ENCODE measurements at regions of chr14 and their contacts with region 1.

Region 1: GRCh38 chr14:70972107-70972976 is 65.1 kb downstream of the PCNX1 start:
- DNase-seq: peak; percentile 72 to 82 (median 78)
- H3K4me3 ChIP-seq: no peak overlapping the region
- H3K4me3 Mint-ChIP-seq: peak overlapping the region in 4 of 8 donors; percentile 20 to 63 (median 46)
- H3K27ac ChIP-seq: peak overlapping the region; percentile 4
- H3K27ac Mint-ChIP-seq: peak overlapping the region; percentile 67 to 90 (median 87)
- H3K4me1 ChIP-seq: peaks cover 48% of the 10 kb centered on the region
- H3K4me1 Mint-ChIP-seq: peaks cover 40 to 67% (median 52%) of the 10 kb centered on the region in 4 donors
- H3K27me3 ChIP-seq: no peaks in the 10 kb centered on the region
- H3K27me3 Mint-ChIP-seq: no peaks in the 10 kb centered on the region

Region 2: DNA sequence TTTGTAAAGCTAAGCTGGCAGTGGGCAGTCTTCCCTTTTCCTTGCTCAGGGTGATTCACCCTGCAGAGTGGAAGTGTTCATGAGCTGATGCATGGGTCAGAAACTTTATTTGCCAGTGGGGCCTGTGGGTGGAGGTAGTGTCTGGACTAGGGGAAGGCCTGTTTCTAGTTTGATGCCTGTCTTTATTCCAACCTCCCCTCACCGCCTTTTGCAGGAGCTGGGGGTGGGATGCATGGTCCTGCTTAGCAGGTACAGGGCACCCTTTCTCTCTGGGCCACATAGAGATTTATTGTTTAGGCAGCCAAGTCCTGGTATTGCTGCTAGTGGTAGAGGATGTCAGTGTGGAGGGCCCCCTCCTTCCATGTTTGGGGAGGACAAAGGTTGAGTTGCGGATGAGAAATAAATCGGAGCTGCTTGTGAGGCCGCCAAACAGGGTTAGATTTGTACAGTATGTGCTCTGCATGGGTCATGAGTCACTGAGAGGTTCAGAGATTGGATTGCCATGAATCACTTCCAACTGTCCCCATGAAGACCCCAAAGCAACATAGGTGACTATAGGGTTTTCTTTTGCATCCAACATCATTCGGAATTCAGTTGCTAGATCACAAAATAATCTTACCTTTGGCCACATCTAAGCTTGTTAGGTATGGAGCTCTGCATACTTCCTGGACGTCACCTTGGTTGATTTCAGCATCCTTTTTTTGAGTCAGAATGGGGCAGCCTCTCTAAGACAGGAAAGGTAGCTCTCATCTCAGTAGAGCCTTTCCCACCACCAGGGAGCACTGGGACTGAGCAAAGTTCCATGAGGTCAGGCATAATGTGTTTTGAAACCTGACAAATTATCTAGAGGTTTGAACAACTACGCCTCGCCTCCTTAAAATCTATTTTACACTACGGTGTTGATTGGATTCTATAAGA is 1084.3 kb before region 1 on chr14:
- CTCF ChIA-PET with region 1: no interaction called
- POLR2A ChIA-PET with region 1: no interaction called
- intact Hi-C with region 1: no loop called
- DNase-seq: no peak
- H3K4me3 ChIP-seq: no peak overlapping the region
- H3K4me3 Mint-ChIP-seq: no peak overlapping the region
- H3K27ac ChIP-seq: no peak overlapping the region
- H3K27ac Mint-ChIP-seq: peak overlapping the region in 1 of 7 donors; percentile 33
- H3K4me1 ChIP-seq: no peaks in the 10 kb centered on the region
- H3K4me1 Mint-ChIP-seq: no peaks in the 10 kb centered on the region
- H3K27me3 ChIP-seq: no peaks in the 10 kb centered on the region
- H3K27me3 Mint-ChIP-seq: peaks cover 18 to 28% of the 10 kb centered on the region in 2 donors

Region 3: DNA sequence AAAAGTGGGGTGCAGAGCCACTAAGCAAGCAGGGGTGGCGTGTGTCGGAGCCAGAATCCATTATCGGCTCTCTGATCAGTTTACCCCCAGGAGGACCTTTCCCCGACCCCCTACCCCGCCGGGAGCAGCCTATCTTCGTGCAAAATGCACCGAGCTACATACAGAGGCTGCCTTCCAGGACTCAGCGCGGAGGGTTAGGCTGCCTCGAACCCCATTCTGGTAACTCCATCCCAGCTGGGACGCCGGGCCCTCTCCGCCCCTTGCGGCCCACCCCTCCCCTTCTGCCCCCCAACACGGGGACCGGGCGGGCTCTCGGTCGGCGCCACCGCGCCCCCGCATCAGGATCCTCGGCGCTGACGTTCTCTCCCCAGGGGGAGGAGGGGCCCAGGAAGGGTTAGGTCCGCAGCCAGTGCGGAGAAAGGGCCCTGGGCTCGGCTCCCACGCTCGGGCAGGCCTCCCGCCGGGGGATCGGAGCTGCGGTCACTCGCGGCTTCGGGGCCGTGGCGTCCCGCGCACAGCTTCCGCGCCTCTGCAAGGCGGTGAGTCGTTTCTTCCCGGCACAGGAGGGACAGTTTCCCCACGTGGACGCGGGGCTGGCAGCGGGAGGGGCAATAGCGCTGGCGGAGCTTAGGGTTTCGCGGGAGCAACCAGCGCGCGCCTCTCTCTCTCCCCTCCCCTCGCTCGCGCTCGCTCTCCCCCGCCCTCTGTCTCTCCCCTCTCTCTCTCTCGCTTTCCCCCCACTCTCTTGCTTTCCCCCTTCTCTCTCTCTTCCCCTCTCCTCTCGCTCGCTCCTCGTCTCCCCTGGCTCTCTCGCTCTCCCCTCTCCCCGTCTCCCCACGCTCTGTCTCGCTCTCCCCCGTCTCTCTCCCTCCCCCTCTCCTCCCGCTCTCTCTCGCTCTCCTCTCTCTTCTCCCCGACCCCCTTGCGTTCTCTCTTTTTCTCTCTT is 150.5 kb before region 1 on chr14:
- CTCF ChIA-PET with region 1: interaction called, 63 read pairs
- POLR2A ChIA-PET with region 1: interaction called, 3 read pairs
- intact Hi-C with region 1: loop called (anchors 1 kb)
- DNase-seq: peak; percentile 37 to 79 (median 49)
- H3K4me3 ChIP-seq: peak overlapping the region; percentile 52 to 73
- H3K4me3 Mint-ChIP-seq: peak overlapping the region; percentile 83 to 93 (median 86)
- H3K27ac ChIP-seq: peak overlapping the region; percentile 14
- H3K27ac Mint-ChIP-seq: peak overlapping the region in 5 of 7 donors; percentile 62 to 77 (median 68)
- H3K4me1 ChIP-seq: peaks cover 18% of the 10 kb centered on the region
- H3K4me1 Mint-ChIP-seq: peaks cover 10 to 23% (median 14%) of the 10 kb centered on the region in 4 donors
- H3K27me3 ChIP-seq: no peaks in the 10 kb centered on the region
- H3K27me3 Mint-ChIP-seq: no peaks in the 10 kb centered on the region

Region 4: GRCh38 chr14:70873627-70874026 is 98.7 kb before region 1 on chr14:
- CTCF ChIA-PET with region 1: interaction called, 3 read pairs
- POLR2A ChIA-PET with region 1: no interaction called
- intact Hi-C with region 1: loop called (anchors 1 kb)
- DNase-seq: peak; percentile 31 to 43 (median 35)
- H3K4me3 ChIP-seq: no peak overlapping the region
- H3K4me3 Mint-ChIP-seq: peak overlapping the region in 5 of 8 donors; percentile 42 to 69 (median 61)
- H3K27ac ChIP-seq: no peak overlapping the region
- H3K27ac Mint-ChIP-seq: peak overlapping the region; percentile 68 to 90 (median 86)
- H3K4me1 ChIP-seq: peaks cover 23% of the 10 kb centered on the region
- H3K4me1 Mint-ChIP-seq: peaks cover 10 to 26% (median 21%) of the 10 kb centered on the region in 4 donors
- H3K27me3 ChIP-seq: no peaks in the 10 kb centered on the region
- H3K27me3 Mint-ChIP-seq: no peaks in the 10 kb centered on the region

Region 5: GRCh38 chr14:70934502-70935134 is 37.7 kb before region 1 on chr14:
- CTCF ChIA-PET with region 1: no interaction called
- POLR2A ChIA-PET with region 1: no interaction called
- intact Hi-C with region 1: no loop called
- DNase-seq: peak in 2 of 5 donors; percentile 22 to 29
- H3K4me3 ChIP-seq: peak overlapping the region in 1 of 2 donors; percentile 15
- H3K4me3 Mint-ChIP-seq: peak overlapping the region; percentile 57 to 84 (median 78)
- H3K27ac ChIP-seq: peak overlapping the region; percentile 27
- H3K27ac Mint-ChIP-seq: peak overlapping the region; percentile 70 to 92 (median 83)
- H3K4me1 ChIP-seq: peaks cover 54% of the 10 kb centered on the region
- H3K4me1 Mint-ChIP-seq: peaks cover 57 to 93% (median 71%) of the 10 kb centered on the region in 4 donors
- H3K27me3 ChIP-seq: no peaks in the 10 kb centered on the region
- H3K27me3 Mint-ChIP-seq: no peaks in the 10 kb centered on the region

Region 6: DNA sequence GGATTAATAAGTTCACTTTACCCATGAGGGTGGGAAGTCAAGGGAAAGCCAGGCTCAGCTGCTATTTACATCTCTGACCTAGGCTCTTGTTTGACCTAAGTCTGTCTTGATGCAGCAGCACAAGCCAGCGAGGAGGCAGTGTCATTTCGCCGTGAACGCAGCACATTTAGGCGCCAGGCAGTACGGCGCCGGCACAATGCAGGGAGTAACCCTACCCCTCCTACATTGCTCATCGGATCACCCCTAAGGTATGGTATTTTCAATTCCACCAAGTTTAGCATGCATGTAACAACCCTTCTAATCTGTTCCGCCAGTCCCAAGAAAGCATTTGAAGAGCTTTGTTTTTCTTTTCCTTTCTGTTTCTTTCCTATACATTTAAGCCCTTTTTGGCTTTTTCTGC is 16.1 kb after region 1 on chr14:
- CTCF ChIA-PET with region 1: interaction called, 4 read pairs
- POLR2A ChIA-PET with region 1: interaction called, 4 read pairs
- intact Hi-C with region 1: loop called (anchors 2 kb)
- DNase-seq: peak in 4 of 5 donors; percentile 22 to 47 (median 27)
- H3K4me3 ChIP-seq: peak overlapping the region; percentile 21 to 71
- H3K4me3 Mint-ChIP-seq: peak overlapping the region; percentile 81 to 89 (median 87)
- H3K27ac ChIP-seq: peak overlapping the region; percentile 50
- H3K27ac Mint-ChIP-seq: peak overlapping the region; percentile 79 to 92 (median 85)
- H3K4me1 ChIP-seq: peaks cover 56% of the 10 kb centered on the region
- H3K4me1 Mint-ChIP-seq: peaks cover 28 to 61% (median 45%) of the 10 kb centered on the region in 4 donors
- H3K27me3 ChIP-seq: no peaks in the 10 kb centered on the region
- H3K27me3 Mint-ChIP-seq: no peaks in the 10 kb centered on the region

Region 7: DNA sequence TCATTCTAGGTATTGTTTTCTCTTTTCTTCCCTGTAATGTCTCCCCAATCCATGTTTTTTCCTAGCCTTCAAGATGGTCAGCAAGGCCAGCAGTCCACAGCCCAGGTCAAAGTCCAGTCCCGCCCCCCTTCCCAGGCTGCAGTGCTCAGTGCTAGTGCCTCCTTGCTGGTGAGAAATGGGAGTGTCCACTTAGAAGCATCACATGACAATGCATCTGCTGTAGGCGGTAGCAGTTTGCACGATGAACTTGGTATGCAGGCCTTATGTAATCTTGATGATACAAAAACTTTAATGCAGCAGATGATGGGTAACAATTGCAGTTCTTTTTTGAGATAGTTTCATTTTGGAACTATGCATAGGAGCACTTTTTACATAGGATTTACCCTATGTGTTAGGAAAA is 23.3 kb after region 1 on chr14:
- CTCF ChIA-PET with region 1: interaction called, 12 read pairs
- POLR2A ChIA-PET with region 1: interaction called, 6 read pairs
- intact Hi-C with region 1: no loop called
- DNase-seq: no peak
- H3K4me3 ChIP-seq: no peak overlapping the region
- H3K4me3 Mint-ChIP-seq: peak overlapping the region in 7 of 8 donors; percentile 27 to 85 (median 69)
- H3K27ac ChIP-seq: no peak overlapping the region
- H3K27ac Mint-ChIP-seq: peak overlapping the region; percentile 45 to 91 (median 78)
- H3K4me1 ChIP-seq: peaks cover 73% of the 10 kb centered on the region
- H3K4me1 Mint-ChIP-seq: peaks cover 36 to 78% (median 57%) of the 10 kb centered on the region in 4 donors
- H3K27me3 ChIP-seq: no peaks in the 10 kb centered on the region
- H3K27me3 Mint-ChIP-seq: no peaks in the 10 kb centered on the region

Region 8: GRCh38 chr14:71011479-71011878 is 39.1 kb after region 1 on chr14:
- CTCF ChIA-PET with region 1: interaction called, 8 read pairs
- POLR2A ChIA-PET with region 1: interaction called, 3 read pairs
- intact Hi-C with region 1: loop called (anchors 2 kb)
- DNase-seq: peak in 4 of 5 donors; percentile 9 to 25 (median 22)
- H3K4me3 ChIP-seq: no peak overlapping the region
- H3K4me3 Mint-ChIP-seq: peak overlapping the region in 3 of 8 donors; percentile 15 to 55 (median 36)
- H3K27ac ChIP-seq: no peak overlapping the region
- H3K27ac Mint-ChIP-seq: peak overlapping the region in 6 of 7 donors; percentile 38 to 81 (median 70)
- H3K4me1 ChIP-seq: peaks cover 31% of the 10 kb centered on the region
- H3K4me1 Mint-ChIP-seq: peaks cover 35 to 69% (median 49%) of the 10 kb centered on the region in 4 donors
- H3K27me3 ChIP-seq: no peaks in the 10 kb centered on the region
- H3K27me3 Mint-ChIP-seq: no peaks in the 10 kb centered on the region